ENCODE measurements at regions of chr5 and their contacts with region 1.

Region 1: DNA sequence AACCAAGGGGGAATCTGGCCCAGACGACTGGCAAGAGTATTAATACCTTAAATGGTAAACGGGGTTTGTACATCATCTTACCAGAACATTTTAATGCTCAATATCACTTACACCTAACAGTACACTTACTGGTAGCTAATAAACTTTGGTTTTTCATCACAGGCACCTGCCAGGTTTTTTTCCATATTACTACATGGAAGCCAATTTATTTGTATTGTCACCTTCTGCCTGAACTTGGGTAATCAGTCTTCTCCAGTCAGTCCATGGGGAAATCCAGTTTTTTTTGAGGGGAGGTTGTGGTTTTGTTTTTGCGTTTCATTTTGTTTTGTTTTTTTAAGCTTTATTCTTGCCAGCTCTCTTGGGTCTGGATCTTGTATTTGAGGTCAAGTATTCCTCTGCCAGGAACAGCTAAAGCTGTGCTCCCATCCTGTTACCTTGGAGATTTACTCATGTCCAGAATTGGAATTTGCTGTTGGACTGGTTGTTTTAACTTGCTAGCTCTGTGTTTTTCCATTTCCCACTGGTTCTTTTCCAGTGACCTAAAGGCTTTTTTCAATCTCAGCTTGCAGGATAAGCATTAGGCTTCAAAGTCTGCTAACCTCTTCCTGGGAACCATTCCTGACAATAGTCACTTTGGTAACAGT is 11.1 kb upstream of the NADK2 start:
- DNase-seq: no peak

Region 2: DNA sequence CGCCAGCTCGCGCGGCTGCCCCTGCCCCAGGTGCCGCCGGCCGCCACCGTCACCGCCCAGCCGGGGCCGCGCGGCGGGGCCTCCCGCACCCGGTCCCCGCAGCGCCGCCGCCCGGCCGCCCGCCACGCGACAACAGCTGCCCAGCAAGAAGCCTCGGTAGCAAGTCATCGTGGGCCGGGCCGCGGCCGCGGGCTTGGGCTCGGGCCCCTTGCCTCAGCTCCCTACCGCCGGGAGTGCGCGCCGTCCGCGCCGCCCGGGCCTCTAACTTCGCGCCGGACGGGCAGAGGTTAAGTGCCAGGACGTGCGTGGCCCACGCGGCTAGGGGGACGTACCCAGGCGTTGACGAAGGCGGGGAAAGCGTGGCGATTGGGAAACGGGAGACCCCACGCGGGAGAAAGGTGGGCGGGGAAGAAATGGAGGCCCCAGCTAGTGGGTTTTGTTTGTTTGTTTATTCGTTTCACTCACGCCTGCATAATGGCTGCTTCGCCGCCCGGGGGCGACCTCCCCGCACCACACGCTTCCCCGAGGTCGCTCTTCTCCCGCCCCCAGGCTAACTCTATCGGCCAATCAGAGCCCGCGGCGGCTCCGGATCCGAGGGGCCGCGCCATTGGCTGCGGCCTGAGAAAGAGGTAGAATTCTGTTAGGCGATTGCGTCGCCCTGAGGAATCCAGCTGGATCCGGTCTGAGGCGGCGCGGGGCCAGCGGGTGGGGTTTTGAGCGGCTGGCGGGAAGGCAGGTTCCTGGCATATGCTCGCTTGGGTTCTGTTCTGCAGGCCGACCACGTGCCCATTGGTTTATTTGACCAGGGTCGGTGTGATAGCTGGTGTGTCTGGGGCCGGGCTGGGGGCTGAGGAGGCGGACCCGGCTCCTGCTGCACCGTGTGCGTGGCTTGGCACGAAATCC is 11.0 kb before region 1 on chr5 and contains the start of gene NADK2:
- CTCF ChIA-PET with region 1: interaction called, 6 read pairs
- POLR2A ChIA-PET with region 1: interaction called, 19 read pairs
- DNase-seq: peak; percentile 91

Measured in HEK293T (cell line).